HepG2 (cell line): ENCODE measurements at regions of chr5 and their contacts with region 1.

Region 1: GRCh38 chr5:177390363-177391300 is 6.4 kb downstream of the SLC34A1 start:
- DNase-seq: peak; percentile 79
- ATAC-seq: peak; percentile 79
- H3K4me3 ChIP-seq: no peak overlapping the region; a peak in 1 of 6 replicates
- H3K27ac ChIP-seq: no peak overlapping the region
- H3K4me1 ChIP-seq: peaks cover 38% of the 10 kb centered on the region
- H3K27me3 ChIP-seq: peaks cover 4 to 47% of the 10 kb centered on the region in 2 experiments; a peak in 4 of 5 replicates
- CTCF ChIP-seq: peak; percentile 96
- EP300 ChIP-seq: no peak
- POLR2A ChIP-seq: no peak
- RAD21 ChIP-seq: peak; percentile 94

Region 2: DNA sequence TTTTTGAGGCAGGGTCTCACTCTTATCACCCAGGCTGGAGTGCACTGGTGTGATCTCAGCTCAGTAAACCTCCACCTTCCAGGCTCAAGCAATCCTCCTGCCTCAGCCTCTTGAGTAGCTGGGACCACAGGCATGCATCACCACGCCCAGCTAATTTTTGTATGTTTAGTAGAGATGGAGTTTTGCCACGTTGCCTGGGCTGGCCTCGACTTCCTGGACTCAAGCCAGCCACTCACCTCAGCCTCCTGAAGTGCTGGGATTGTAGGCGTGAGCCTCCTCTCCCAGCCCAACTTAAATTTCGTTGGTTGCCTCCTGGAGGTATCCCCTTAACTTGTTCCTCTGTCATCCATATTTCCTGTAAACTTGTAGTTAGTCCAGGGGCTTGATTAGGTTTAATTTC is 134.3 kb before region 1 on chr5:
- CTCF ChIA-PET with region 1: no interaction called
- POLR2A ChIA-PET with region 1: no interaction called
- in situ Hi-C with region 1: no loop called
- intact Hi-C with region 1: no loop called
- DNase-seq: no peak
- ATAC-seq: no peak
- H3K4me3 ChIP-seq: no peak overlapping the region
- H3K27ac ChIP-seq: no peak overlapping the region
- H3K4me1 ChIP-seq: no peaks in the 10 kb centered on the region
- H3K27me3 ChIP-seq: peaks cover 0 to 4% of the 10 kb centered on the region in 2 experiments; a peak in 1 of 5 replicates
- CTCF ChIP-seq: no peak
- EP300 ChIP-seq: no peak
- POLR2A ChIP-seq: no peak
- RAD21 ChIP-seq: no peak

Region 3: DNA sequence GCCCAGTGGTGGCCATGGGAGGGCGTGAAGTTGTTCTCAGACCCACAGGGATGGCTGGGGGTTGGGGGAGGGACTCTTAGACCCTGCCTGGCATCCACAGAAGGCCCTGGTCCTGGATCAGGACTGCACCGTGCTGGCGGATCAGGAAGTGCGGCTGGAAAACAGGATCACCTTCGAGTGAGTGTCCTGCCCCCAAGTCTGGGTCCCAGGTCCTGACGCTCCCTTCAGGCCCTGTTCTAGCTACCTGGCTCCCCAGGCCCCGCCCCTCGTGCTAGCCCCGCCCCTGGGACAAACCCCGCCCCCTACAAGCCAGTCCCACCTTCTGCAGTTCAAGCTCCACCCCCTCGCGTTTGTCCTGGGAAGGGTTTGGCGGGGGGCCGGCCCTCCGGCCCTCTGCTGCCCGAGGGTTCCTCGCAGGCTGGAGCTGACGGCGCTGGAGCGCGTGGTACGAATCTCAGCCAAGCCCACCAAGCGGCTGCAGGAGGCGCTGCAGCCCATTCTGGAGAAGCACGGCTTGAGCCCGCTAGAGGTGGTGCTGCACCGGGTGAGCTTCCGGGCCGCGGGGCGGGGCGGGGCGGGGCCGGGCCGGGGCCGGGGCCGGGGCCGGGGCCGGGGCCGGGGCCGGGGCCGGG is 20.0 kb before region 1 on chr5:
- CTCF ChIA-PET with region 1: interaction called, 19 read pairs
- POLR2A ChIA-PET with region 1: interaction called, 25 read pairs
- in situ Hi-C with region 1: no loop called
- intact Hi-C with region 1: no loop called
- DNase-seq: peak; percentile 94
- ATAC-seq: peak; percentile 82
- H3K4me3 ChIP-seq: peak overlapping the region in 2 of 3 experiments; percentile 74 to 92; a peak in 3 of 6 replicates
- H3K27ac ChIP-seq: peak overlapping the region; percentile 35
- H3K4me1 ChIP-seq: peaks cover 74% of the 10 kb centered on the region
- H3K27me3 ChIP-seq: no peaks in the 10 kb centered on the region; a peak in 1 of 5 replicates
- CTCF ChIP-seq: peak; percentile 92
- EP300 ChIP-seq: no peak
- POLR2A ChIP-seq: no peak
- RAD21 ChIP-seq: peak; percentile 95